ENCODE measurements at regions of chr9 and their contacts with region 1.

Region 1: GRCh38 chr9:132354637-132355355 is at the start of gene SETX:
- DNase-seq: peak; percentile 97
- H3K4me3 Mint-ChIP-seq: peak within 1 kb of the TSS; percentile 91
- H3K27ac Mint-ChIP-seq: peak within 1 kb of the TSS; percentile 97
- H3K4me1 Mint-ChIP-seq: peaks cover 37% of the 10 kb centered on the region
- H3K27me3 Mint-ChIP-seq: no peaks in the 10 kb centered on the region
- total RNA-seq, gene SETX: 41.6 to 42.3 TPM

Region 2: GRCh38 chr9:130693426-130694191 is 1661.2 kb before region 1 on chr9 and contains the start of gene EXOSC2:
- CTCF ChIA-PET with region 1: no interaction called
- POLR2A ChIA-PET with region 1: no interaction called
- intact Hi-C with region 1: loop called (anchors 10 kb)
- DNase-seq: peak; percentile 99
- H3K4me3 Mint-ChIP-seq: peak within 1 kb of the TSS; percentile 90
- H3K27ac Mint-ChIP-seq: peak within 1 kb of the TSS; percentile 86
- H3K4me1 Mint-ChIP-seq: peaks cover 47% of the 10 kb centered on the region
- H3K27me3 Mint-ChIP-seq: no peaks in the 10 kb centered on the region
- total RNA-seq, gene EXOSC2: 77.3 to 80.5 TPM

Region 3: GRCh38 chr9:131320031-131320685 is 1034.6 kb before region 1 on chr9:
- CTCF ChIA-PET with region 1: no interaction called
- POLR2A ChIA-PET with region 1: no interaction called
- intact Hi-C with region 1: no loop called
- DNase-seq: no peak
- H3K4me3 Mint-ChIP-seq: no peak overlapping the region
- H3K27ac Mint-ChIP-seq: no peak overlapping the region
- H3K4me1 Mint-ChIP-seq: no peaks in the 10 kb centered on the region
- H3K27me3 Mint-ChIP-seq: no peaks in the 10 kb centered on the region

Region 4: DNA sequence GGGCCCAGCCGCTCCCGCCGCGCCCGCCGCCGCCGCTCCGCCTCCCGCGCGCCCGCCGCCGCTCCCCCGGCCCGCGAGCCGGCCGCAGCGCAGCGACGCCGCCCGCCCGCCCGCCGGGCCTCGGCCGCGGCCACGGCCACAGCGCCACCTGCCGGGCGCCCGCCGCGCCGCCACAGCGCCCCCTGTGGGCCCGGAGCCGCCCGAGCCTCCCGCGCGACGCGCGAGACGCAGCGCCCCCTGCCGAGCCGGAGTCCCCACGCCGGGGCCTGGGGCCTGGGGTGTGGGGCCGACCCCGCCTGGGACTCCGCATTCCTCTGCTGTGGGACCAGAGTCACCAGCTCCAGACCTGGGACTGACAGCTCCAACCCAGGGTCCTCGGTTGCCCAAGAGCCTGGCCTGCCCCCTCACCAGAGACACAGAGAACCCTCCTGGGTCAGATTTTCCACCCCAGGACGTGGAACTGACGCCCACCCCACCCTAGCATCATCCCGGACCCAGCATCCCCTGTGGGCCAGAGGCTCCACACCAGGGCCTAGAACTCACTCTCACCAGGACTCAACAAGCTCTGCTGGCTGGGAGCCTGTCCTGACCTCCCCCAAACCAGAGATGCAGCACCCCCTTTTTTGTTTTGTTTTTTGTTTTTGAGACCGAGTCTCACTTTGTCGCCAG is 614.7 kb before region 1 on chr9 and contains the start of gene RAPGEF1:
- CTCF ChIA-PET with region 1: no interaction called
- POLR2A ChIA-PET with region 1: no interaction called
- intact Hi-C with region 1: loop called (anchors 10 kb)
- DNase-seq: peak; percentile 86
- H3K4me3 Mint-ChIP-seq: peak within 1 kb of the TSS; percentile 91
- H3K27ac Mint-ChIP-seq: peak within 1 kb of the TSS; percentile 90
- H3K4me1 Mint-ChIP-seq: peaks cover 49% of the 10 kb centered on the region
- H3K27me3 Mint-ChIP-seq: no peaks in the 10 kb centered on the region
- total RNA-seq, gene RAPGEF1: 91.9 to 92.3 TPM

Region 5: DNA sequence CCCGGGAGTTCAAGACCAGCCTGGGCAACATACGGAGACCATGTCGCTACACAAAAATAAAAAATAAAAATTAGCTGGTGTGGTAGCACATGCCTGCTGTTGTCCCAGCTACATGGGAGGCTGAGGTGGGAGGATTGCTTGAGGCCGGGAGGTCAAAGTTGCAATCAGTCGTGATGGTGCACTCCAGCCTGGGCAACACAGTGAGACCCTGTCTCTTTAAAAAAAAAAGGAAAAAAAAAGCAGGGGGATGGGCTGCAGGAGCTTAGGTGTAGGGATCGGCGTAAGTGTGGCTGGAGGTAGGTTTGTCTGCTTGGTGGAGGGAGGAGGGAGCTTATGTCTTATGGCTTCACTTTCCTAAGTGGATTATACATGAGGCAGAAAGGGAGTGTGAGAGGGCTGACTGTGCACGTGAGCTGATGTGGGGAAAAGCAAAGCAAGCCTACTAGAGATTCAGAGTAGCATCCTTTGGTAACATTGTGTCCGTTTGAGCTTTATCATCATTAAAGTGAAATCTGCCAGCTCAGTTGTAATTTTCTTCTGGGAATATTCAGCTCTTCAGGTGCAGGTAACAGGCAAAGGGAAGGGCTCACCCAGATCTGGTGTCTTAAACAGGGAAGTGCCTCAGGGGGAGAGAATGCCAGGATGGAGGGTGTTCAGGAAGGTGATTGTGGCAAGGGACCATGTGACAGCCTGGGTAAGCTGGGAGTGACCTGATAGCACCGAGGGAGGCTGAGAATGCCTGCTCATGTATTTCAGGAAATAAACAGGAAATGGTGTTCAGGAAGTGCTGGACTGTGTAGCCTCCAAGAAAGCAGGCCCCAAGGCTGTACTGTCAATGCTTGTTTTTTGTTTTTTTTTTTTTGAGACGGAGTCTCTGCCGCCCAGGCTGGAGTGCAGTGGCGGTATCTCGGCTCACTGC is 17.6 kb after region 1 on chr9:
- CTCF ChIA-PET with region 1: no interaction called
- POLR2A ChIA-PET with region 1: interaction called, 4 read pairs
- intact Hi-C with region 1: loop called (anchors 1 kb)
- DNase-seq: no peak
- H3K4me3 Mint-ChIP-seq: no peak overlapping the region
- H3K27ac Mint-ChIP-seq: peak overlapping the region; percentile 6
- H3K4me1 Mint-ChIP-seq: peaks cover 15% of the 10 kb centered on the region
- H3K27me3 Mint-ChIP-seq: no peaks in the 10 kb centered on the region

Region 6: DNA sequence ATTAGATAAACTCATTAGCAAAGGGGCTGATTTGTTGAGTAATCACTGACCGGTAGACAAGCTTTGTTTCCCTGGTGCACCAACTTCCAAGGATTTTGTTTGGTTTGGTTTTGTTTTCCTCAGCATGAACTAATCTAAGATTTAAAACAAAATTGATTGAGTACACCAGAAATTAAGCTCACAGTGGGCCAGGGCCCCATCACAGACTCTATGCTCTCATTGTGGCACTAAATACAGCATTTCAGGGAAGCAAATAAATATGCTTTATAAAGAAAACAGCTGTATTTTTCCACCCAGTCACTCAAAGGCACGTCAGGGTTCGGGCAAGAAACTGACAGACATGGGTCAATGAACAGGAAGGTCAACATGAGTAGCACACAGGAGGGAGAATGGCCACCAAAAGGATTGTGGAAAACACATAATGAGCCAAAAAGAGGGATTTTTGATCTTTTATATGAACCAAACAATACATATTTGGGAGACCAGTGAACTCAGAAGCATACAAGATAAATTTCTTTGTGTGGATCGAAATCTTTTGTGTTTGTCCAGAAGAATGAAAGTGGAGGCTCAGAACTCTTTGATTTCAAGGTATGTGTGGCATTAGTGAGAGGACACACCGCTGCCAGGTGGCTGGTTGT is 64.0 kb after region 1 on chr9:
- CTCF ChIA-PET with region 1: no interaction called
- POLR2A ChIA-PET with region 1: no interaction called
- intact Hi-C with region 1: no loop called
- DNase-seq: no peak
- H3K4me3 Mint-ChIP-seq: no peak overlapping the region
- H3K27ac Mint-ChIP-seq: no peak overlapping the region
- H3K4me1 Mint-ChIP-seq: no peaks in the 10 kb centered on the region
- H3K27me3 Mint-ChIP-seq: peaks cover 46% of the 10 kb centered on the region

Region 7: DNA sequence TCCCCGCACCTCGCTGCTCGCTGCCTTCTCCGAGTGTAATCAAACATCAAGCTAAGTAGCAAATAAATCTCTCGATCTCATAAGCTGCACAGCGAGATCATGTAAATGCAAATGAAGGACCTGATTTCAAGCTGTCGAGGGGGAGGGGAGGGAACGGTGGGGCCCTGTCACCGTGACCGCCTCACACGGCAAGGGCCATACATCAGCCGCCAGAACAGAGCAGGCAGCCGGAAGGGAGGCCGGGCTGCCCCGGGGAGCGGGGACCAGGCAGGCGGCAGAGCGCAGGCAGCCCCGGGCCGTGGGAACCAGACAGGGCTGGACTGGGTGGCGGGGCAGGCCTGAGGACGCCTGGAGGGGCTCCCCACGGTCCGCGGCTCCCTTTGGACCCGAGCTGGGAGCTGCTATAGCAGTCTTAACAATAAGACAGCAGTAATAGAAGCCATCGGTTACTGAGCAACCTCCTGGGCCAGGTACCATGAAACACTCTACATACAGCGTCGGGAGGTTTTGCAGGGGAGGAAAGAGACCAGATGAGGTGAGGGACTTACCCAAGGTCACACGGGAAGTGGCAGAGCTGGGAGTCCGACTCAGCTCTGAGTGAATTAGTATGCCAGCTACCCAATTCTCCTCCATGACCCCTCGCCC is 132.0 kb after region 1 on chr9:
- CTCF ChIA-PET with region 1: no interaction called
- POLR2A ChIA-PET with region 1: no interaction called
- intact Hi-C with region 1: no loop called
- DNase-seq: peak; percentile 78
- H3K4me3 Mint-ChIP-seq: peak overlapping the region; percentile 56
- H3K27ac Mint-ChIP-seq: peak overlapping the region; percentile 85
- H3K4me1 Mint-ChIP-seq: peaks cover 28% of the 10 kb centered on the region
- H3K27me3 Mint-ChIP-seq: peaks cover 31% of the 10 kb centered on the region

Region 8: GRCh38 chr9:132669698-132670456 is 315.1 kb after region 1 on chr9 and contains the start of gene DDX31:
- CTCF ChIA-PET with region 1: no interaction called
- POLR2A ChIA-PET with region 1: no interaction called
- intact Hi-C with region 1: loop called (anchors 5 kb)
- DNase-seq: peak; percentile 89
- H3K4me3 Mint-ChIP-seq: peak within 1 kb of the TSS; percentile 86
- H3K27ac Mint-ChIP-seq: peak within 1 kb of the TSS; percentile 87
- H3K4me1 Mint-ChIP-seq: peaks cover 44% of the 10 kb centered on the region
- H3K27me3 Mint-ChIP-seq: no peaks in the 10 kb centered on the region
- total RNA-seq, gene DDX31: 17.2 to 18.8 TPM

Region 9: DNA sequence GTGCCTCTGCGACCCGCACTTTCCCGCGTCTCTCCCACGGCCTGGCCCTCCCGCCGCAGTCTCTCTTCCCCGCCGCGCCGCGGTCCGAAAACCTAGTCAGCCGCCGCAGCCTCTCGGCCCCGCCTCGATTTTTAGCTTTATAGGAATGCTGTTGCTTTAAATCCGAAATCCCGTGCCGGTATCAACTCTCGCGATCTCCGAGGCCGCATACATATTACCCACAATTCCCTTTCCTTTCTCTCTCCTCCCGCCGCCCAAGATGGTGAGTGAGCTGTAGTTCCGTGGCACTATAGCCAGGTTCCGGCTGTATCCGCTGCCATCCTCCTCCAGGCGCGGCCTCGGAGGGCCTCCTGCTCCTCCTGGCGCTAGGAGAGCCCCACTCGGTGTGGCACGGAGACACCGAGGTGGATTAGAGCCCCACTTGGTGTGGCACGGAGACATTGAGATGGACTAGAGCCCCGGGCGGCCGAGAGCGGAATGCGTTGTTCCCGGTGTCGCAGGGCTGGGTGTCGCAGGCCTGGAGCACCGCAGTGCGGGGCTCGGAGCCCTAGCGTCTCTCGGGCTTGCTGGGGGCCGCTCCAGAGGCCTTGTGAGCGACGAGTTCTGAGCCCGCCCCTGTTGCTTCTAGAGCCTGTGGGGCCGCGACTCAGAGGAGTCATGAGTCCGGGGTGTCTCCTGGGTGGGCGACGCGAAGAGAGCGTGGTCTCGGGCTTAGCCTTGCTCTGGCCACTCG is 993.4 kb after region 1 on chr9 and contains the starts of genes MED22 and RPL7A:
- CTCF ChIA-PET with region 1: no interaction called
- POLR2A ChIA-PET with region 1: no interaction called
- intact Hi-C with region 1: loop called (anchors 5 kb)
- DNase-seq: peak; percentile 96
- H3K4me3 Mint-ChIP-seq: peak within 1 kb of the TSS; percentile 97
- H3K27ac Mint-ChIP-seq: peak within 1 kb of the TSS; percentile 98
- H3K4me1 Mint-ChIP-seq: peaks cover 38% of the 10 kb centered on the region
- H3K27me3 Mint-ChIP-seq: no peaks in the 10 kb centered on the region
- total RNA-seq, gene MED22: 20.8 to 20.9 TPM
- total RNA-seq, gene RPL7A: 3,340 to 3,454 TPM

Measured in activated CD4-positive, alpha-beta memory T cell treated with anti-CD3 and anti-CD28 coated beads for 36 hours (primary cell).